ENCODE measurements at regions of chr13 and their contacts with region 1.

Region 1: DNA sequence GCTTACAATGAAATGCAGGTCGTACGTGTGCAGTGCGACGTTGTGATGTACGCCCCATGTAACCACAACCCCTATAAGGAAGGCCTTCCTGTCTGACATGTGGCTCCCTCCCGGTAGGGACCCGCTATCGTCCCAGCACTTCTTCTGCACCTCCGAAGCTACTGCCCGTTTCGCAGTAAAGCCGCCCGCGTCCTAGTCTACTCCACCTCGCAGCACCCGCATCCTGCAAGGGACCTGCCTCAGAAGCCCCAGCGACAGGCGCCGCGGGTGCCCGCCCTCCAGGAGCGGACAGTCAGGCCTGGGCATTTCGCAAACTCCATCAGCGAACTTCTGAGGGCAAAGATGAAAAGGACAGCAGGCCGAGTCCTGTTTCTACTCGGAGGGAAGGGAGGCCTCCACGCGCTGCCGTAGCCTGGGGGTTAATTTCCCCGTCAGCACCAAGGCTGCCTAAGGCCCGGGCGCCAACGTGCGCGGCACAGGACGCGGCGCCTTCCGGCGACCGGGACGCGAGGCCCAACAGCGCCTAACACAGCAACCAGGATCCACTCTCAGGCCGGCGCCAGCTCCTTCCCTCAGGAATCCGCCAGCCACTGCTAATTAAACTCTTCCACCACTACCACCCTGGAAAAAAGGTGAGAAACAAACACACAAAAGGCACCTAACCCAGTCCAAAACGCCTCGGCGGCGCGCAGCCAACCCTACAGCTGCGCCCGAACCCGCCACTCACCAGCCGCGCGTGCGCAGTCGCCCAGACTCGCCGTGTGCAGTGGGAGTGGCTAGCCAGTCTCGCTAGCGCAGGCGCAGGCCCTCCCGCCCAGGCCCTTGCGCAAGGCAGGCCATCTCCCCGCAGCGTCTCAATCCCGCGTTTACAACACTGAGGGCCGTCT is at the start of gene EEF1AKMT1:
- DNase-seq: peak; percentile 94 to 98 (median 95)
- ATAC-seq: peak; percentile 97 to 99 (median 98)
- H3K4me3 ChIP-seq: peak within 1 kb of the TSS; percentile 34 to 80 (median 70)
- H3K27ac ChIP-seq: peak within 1 kb of the TSS; percentile 85 to 97 (median 92)
- H3K4me1 ChIP-seq: peaks cover 0 to 14% (median 8%) of the 10 kb centered on the region in 12 donors
- H3K27me3 ChIP-seq: no peaks in the 10 kb centered on the region
- CTCF ChIP-seq: no peak
- POLR2A ChIP-seq: peak in 1 of 2 donors; percentile 84
- total RNA-seq, gene EEF1AKMT1: 4.5 to 10.2 (median 8.3) TPM

Region 2: DNA sequence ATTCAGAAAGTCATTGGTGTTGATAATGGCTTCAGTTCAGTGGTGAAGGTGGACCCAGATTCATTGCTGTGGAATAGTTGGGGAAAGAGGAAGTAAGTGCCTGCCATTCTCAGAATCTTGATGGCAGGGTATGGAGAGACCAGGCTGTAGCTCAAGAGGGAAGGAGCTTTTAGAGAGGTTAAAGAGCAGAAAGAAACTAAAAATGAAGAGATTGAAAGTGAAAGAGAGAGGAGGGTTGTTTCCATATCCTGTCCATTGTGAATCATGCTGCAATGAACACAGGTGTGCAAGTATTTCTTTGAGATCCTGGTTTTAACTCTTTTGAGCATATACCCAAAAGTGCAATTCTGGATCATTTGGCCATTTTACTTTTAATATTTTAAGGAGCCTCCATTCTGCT is 553.9 kb before region 1 on chr13:
- intact Hi-C with region 1: no loop called
- DNase-seq: no peak
- ATAC-seq: no peak
- H3K4me3 ChIP-seq: no peak overlapping the region
- H3K27ac ChIP-seq: no peak overlapping the region
- H3K4me1 ChIP-seq: peaks cover 0 to 15% (median 0%) of the 10 kb centered on the region in 12 donors
- H3K27me3 ChIP-seq: peaks cover 0 to 31% (median 0%) of the 10 kb centered on the region in 9 donors
- CTCF ChIP-seq: no peak
- POLR2A ChIP-seq: no peak

Region 3: GRCh38 chr13:20647758-20648157 is 125.7 kb before region 1 on chr13:
- intact Hi-C with region 1: no loop called
- DNase-seq: no peak
- ATAC-seq: no peak
- H3K4me3 ChIP-seq: no peak overlapping the region
- H3K27ac ChIP-seq: no peak overlapping the region
- H3K4me1 ChIP-seq: no peaks in the 10 kb centered on the region
- H3K27me3 ChIP-seq: no peaks in the 10 kb centered on the region
- CTCF ChIP-seq: no peak
- POLR2A ChIP-seq: no peak

Region 4: DNA sequence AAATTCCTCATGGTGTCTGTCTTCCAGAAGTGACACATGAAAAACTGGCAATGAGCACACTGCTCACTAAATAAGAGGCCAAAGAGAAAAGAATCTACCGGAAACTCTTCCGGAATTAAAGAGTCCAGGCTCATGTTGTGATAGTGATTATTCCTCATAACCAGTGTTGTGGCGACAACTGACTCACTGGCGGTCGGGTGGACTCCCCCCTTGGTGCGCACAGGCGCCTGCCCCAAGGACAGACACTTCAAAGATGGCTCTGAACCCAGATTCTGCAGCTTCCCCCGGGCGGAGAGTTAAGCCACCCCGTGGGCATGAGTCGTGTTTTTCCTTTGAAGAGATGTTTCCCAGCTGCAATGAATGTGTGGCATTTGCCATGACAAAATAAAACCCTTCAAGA is 59.7 kb before region 1 on chr13:
- intact Hi-C with region 1: loop called in 5 of 10 experiments (anchors 2 to 10 kb)
- DNase-seq: peak in 2 of 5 donors; percentile 59 to 63
- ATAC-seq: peak in 2 of 4 donors; percentile 49 to 56
- H3K4me3 ChIP-seq: peak overlapping the region in 3 of 12 donors; percentile 7 to 32 (median 14)
- H3K27ac ChIP-seq: peak overlapping the region in 11 of 12 donors; percentile 36 to 92 (median 65)
- H3K4me1 ChIP-seq: peaks cover 0 to 41% (median 19%) of the 10 kb centered on the region in 12 donors
- H3K27me3 ChIP-seq: no peaks in the 10 kb centered on the region
- CTCF ChIP-seq: no peak
- POLR2A ChIP-seq: no peak

Region 5: GRCh38 chr13:20814224-20814910 is 40.9 kb after region 1 on chr13:
- intact Hi-C with region 1: loop called in 1 of 10 experiments (anchors 5 kb)
- DNase-seq: peak; percentile 79 to 93 (median 86)
- ATAC-seq: peak; percentile 95 to 97 (median 96)
- H3K4me3 ChIP-seq: peak overlapping the region in 4 of 12 donors; percentile 10 to 33 (median 18)
- H3K27ac ChIP-seq: peak overlapping the region; percentile 41 to 85 (median 72)
- H3K4me1 ChIP-seq: peaks cover 0 to 40% (median 29%) of the 10 kb centered on the region in 12 donors
- H3K27me3 ChIP-seq: no peaks in the 10 kb centered on the region
- CTCF ChIP-seq: no peak
- POLR2A ChIP-seq: no peak

Region 6: GRCh38 chr13:20828539-20829364 is 55.3 kb after region 1 on chr13:
- intact Hi-C with region 1: loop called in 2 of 10 experiments (anchors 5 to 10 kb)
- DNase-seq: peak in 2 of 5 donors; percentile 30
- ATAC-seq: peak in 3 of 4 donors; percentile 30 to 40 (median 39)
- H3K4me3 ChIP-seq: peak overlapping the region in 9 of 12 donors; percentile 22 to 53 (median 34)
- H3K27ac ChIP-seq: peak overlapping the region in 11 of 12 donors; percentile 9 to 69 (median 50)
- H3K4me1 ChIP-seq: peaks cover 0 to 40% (median 8%) of the 10 kb centered on the region in 12 donors
- H3K27me3 ChIP-seq: no peaks in the 10 kb centered on the region
- CTCF ChIP-seq: peak; percentile 61 to 89 (median 81)
- POLR2A ChIP-seq: no peak

Region 7: DNA sequence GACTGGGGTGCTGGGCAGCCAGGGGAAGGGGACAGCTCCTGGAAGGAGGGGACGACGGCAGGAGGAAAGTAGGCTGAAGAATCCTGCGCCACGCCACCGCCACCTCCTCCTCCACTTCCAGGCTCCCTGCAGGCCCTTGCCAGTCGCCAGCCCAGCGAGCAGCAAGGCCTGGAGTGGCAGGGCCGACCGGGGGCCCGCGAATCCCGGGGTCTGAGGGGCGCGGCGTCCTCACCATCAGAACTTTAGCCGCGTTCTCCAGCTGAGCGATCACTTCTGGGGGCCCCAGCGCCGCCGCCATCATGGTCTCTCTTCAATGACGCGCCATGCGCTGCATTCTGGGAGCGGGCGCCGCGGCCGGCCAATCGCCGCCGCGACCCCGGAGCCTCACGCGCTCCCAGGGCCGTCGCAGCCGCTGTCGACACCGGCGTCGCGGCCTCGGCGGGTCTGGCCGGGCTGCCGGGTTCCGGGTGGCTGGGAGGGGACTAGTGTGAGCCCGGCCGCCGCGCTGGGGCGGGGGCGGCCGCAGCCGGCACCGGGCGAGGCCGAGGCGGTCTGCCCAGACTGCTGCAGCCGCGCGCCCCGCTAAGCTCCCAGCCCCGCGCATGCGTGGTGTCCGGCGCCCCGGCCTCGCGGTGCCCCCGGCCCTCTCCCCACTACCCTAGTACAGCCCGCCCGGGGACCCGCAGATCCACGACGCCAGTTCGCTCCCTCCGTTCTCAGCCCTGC is 129.2 kb after region 1 on chr13 and contains the start of gene XPO4:
- intact Hi-C with region 1: loop called in 1 of 10 experiments (anchors 5 kb)
- DNase-seq: peak; percentile 81 to 91 (median 84)
- ATAC-seq: peak; percentile 83 to 98 (median 97)
- H3K4me3 ChIP-seq: peak within 1 kb of the TSS; percentile 72 to 99 (median 92)
- H3K27ac ChIP-seq: peak within 1 kb of the TSS; percentile 86 to 97 (median 92)
- H3K4me1 ChIP-seq: peaks cover 0 to 24% (median 15%) of the 10 kb centered on the region in 12 donors
- H3K27me3 ChIP-seq: no peaks in the 10 kb centered on the region
- CTCF ChIP-seq: no peak
- POLR2A ChIP-seq: peak in 1 of 2 donors; percentile 52
- total RNA-seq, gene XPO4: 18.5 to 53.7 (median 28.4) TPM

Region 8: DNA sequence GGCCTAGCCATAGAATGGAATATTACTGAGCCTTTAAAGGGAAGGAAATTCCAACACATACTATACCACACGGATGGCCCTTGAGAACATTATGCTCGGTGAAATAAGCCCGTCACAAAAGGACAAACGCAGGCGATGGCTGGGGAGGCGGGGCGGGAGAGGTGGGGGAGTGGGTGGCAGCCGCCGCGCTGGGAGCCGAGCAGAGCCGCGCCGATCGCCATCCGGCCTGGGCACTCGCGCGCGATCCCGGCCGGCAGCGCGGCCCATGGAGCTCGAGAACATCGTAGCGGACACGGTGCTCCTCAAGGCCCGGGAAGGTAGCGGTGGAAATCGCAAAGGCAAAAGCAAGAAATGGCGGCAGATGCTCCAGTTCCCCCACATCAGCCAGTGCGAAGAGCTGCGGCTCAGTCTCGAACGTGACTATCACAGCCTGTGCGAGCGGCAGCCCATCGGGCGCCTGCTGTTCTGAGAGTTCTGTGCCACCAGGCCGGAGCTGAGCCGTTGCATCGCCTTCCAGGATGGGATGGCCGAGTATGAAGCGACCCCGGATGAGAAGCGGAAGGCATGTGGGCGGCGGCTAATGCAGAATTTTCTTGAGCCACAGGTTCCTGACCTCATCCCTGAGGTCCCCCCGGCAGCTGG is 545.6 kb after region 1 on chr13:
- intact Hi-C with region 1: no loop called
- DNase-seq: no peak
- ATAC-seq: peak in 3 of 4 donors; percentile 33 to 50 (median 48)
- H3K4me3 ChIP-seq: peak overlapping the region in 10 of 12 donors; percentile 16 to 53 (median 37)
- H3K27ac ChIP-seq: no peak overlapping the region
- H3K4me1 ChIP-seq: peaks cover 0 to 3% (median 0%) of the 10 kb centered on the region in 12 donors
- H3K27me3 ChIP-seq: no peaks in the 10 kb centered on the region
- CTCF ChIP-seq: no peak
- POLR2A ChIP-seq: no peak